Activated CD8-positive, alpha-beta T cell treated with anti-CD3 and anti-CD28 coated beads, Interleukin-2, amount 10 ng/mL, durations not matched to agents 7 days and 5 days (primary cell): ENCODE measurements at regions of chr19 and their contacts with region 1.

Region 1: GRCh38 chr19:44845612-44846454 is at the start of gene NECTIN2:
- DNase-seq: peak; percentile 91
- ATAC-seq: peak; percentile 80
- H3K4me3 Mint-ChIP-seq: peak within 1 kb of the TSS; percentile 79
- H3K27ac Mint-ChIP-seq: peak within 1 kb of the TSS; percentile 48
- H3K4me1 Mint-ChIP-seq: peaks cover 37% of the 10 kb centered on the region
- H3K27me3 Mint-ChIP-seq: peaks cover 43% of the 10 kb centered on the region
- total RNA-seq, gene NECTIN2: 0.26 to 0.31 TPM

Region 2: GRCh38 chr19:44782729-44783128 is 63.1 kb before region 1 on chr19:
- CTCF ChIA-PET with region 1: interaction called, 18 read pairs
- POLR2A ChIA-PET with region 1: no interaction called
- DNase-seq: no peak
- ATAC-seq: no peak
- H3K4me3 Mint-ChIP-seq: no peak overlapping the region
- H3K27ac Mint-ChIP-seq: no peak overlapping the region
- H3K4me1 Mint-ChIP-seq: peaks cover 7% of the 10 kb centered on the region
- H3K27me3 Mint-ChIP-seq: no peaks in the 10 kb centered on the region